ENCODE measurements at regions of chr2 and their contacts with region 1.

Region 1: GRCh38 chr2:84881581-84882414 is 914 bp upstream of the TRABD2A start:
- DNase-seq: peak; percentile 82
- H3K4me3 Mint-ChIP-seq: peak overlapping the region; percentile 81
- H3K27ac Mint-ChIP-seq: no peak overlapping the region
- H3K4me1 Mint-ChIP-seq: peaks cover 23% of the 10 kb centered on the region
- H3K27me3 Mint-ChIP-seq: peaks cover 41% of the 10 kb centered on the region
- CTCF ChIP-seq: peak; percentile 83

Region 2: DNA sequence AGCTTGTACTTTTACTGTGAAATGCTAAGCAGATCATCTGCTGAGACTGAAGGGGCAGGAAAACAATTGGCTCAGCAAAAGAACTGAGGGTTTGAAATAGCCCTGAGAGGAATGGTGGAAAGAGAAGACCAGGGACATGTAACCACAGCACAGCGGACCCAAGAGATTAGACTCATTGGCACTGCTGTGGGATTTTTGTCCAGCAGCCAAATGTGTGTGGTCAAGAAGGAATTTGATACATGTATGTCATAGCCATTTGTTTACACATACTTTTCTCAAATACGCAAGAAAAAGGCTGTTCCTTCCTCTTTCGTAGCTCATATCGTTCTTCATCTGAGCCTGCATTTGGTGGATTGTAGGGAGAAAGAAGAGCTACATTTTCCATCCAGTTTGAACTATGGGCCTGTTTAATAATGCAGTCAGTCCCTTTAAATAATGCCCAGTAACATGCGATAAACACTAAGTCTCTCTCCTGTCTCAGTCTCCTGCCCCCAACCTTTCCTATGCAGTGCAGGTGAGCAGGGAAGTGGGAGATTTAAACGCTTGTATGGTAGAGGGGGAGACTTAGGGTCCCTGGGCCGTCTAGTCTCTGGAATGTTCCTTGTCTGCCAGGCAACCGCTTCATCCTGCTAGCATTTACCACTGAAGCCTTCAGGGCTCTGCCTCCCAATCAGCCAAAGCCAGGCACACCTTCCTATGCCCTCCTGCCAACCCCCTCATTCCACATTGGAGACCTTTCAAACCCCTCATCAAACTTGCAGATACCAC is 74.6 kb before region 1 on chr2:
- CTCF ChIA-PET with region 1: no interaction called
- intact Hi-C with region 1: loop called (anchors 5 kb)
- DNase-seq: peak; percentile 65
- H3K4me3 Mint-ChIP-seq: peak overlapping the region; percentile 11
- H3K27ac Mint-ChIP-seq: peak overlapping the region; percentile 31
- H3K4me1 Mint-ChIP-seq: peaks cover 21% of the 10 kb centered on the region
- H3K27me3 Mint-ChIP-seq: peaks cover 14% of the 10 kb centered on the region
- CTCF ChIP-seq: no peak

Region 3: GRCh38 chr2:84946204-84947009 is 64.6 kb after region 1 on chr2:
- CTCF ChIA-PET with region 1: interaction called, 17 read pairs
- intact Hi-C with region 1: no loop called
- DNase-seq: peak; percentile 87
- H3K4me3 Mint-ChIP-seq: peak overlapping the region; percentile 35
- H3K27ac Mint-ChIP-seq: peak overlapping the region; percentile 95
- H3K4me1 Mint-ChIP-seq: peaks cover 31% of the 10 kb centered on the region
- H3K27me3 Mint-ChIP-seq: no peaks in the 10 kb centered on the region
- CTCF ChIP-seq: no peak